HepG2 (cell line): ENCODE measurements at regions of chr5 and their contacts with region 1.

Region 1: GRCh38 chr5:154189819-154190594 is 526 bp upstream of the GALNT10 start:
- DNase-seq: peak; percentile 61
- ATAC-seq: peak; percentile 86
- H3K4me3 ChIP-seq: peak overlapping the region; percentile 80 to 85 (median 85)
- H3K27ac ChIP-seq: peak overlapping the region; percentile 39
- H3K4me1 ChIP-seq: peaks cover 31% of the 10 kb centered on the region
- H3K27me3 ChIP-seq: peaks cover 0 to 9% of the 10 kb centered on the region in 2 experiments; a peak in 2 of 5 replicates
- CTCF ChIP-seq: no peak
- EP300 ChIP-seq: no peak
- POLR2A ChIP-seq: peak in 1 of 2 experiments; percentile 46; a peak in 1 of 4 replicates
- RAD21 ChIP-seq: 0 out of 2 replicates have a peak, but pooled peaks have one; percentile 18

Region 2: GRCh38 chr5:153937661-153938060 is 252.3 kb before region 1 on chr5:
- CTCF ChIA-PET with region 1: no interaction called
- POLR2A ChIA-PET with region 1: no interaction called
- in situ Hi-C with region 1: no loop called
- intact Hi-C with region 1: no loop called
- DNase-seq: no peak
- ATAC-seq: no peak
- H3K4me3 ChIP-seq: no peak overlapping the region
- H3K27ac ChIP-seq: no peak overlapping the region
- H3K4me1 ChIP-seq: no peaks in the 10 kb centered on the region
- H3K27me3 ChIP-seq: no peaks in the 10 kb centered on the region
- CTCF ChIP-seq: no peak
- EP300 ChIP-seq: no peak
- POLR2A ChIP-seq: no peak
- RAD21 ChIP-seq: no peak

Region 3: GRCh38 chr5:154176181-154176580 is 13.8 kb before region 1 on chr5:
- CTCF ChIA-PET with region 1: no interaction called
- POLR2A ChIA-PET with region 1: no interaction called
- in situ Hi-C with region 1: no loop called
- intact Hi-C with region 1: no loop called
- DNase-seq: no peak
- ATAC-seq: no peak
- H3K4me3 ChIP-seq: no peak overlapping the region
- H3K27ac ChIP-seq: no peak overlapping the region
- H3K4me1 ChIP-seq: no peaks in the 10 kb centered on the region
- H3K27me3 ChIP-seq: no peaks in the 10 kb centered on the region; a peak in 2 of 5 replicates
- CTCF ChIP-seq: no peak
- EP300 ChIP-seq: no peak
- POLR2A ChIP-seq: no peak
- RAD21 ChIP-seq: no peak

Region 4: GRCh38 chr5:154395407-154396258 is 205.6 kb after region 1 on chr5:
- CTCF ChIA-PET with region 1: no interaction called
- POLR2A ChIA-PET with region 1: no interaction called
- in situ Hi-C with region 1: loop called (anchors 5 kb)
- intact Hi-C with region 1: no loop called
- DNase-seq: no peak
- ATAC-seq: no peak
- H3K4me3 ChIP-seq: no peak overlapping the region
- H3K27ac ChIP-seq: no peak overlapping the region
- H3K4me1 ChIP-seq: no peaks in the 10 kb centered on the region
- H3K27me3 ChIP-seq: no peaks in the 10 kb centered on the region
- CTCF ChIP-seq: no peak
- EP300 ChIP-seq: no peak
- POLR2A ChIP-seq: no peak
- RAD21 ChIP-seq: no peak